ENCODE measurements at regions of chr19 and their contacts with region 1.

Region 1: DNA sequence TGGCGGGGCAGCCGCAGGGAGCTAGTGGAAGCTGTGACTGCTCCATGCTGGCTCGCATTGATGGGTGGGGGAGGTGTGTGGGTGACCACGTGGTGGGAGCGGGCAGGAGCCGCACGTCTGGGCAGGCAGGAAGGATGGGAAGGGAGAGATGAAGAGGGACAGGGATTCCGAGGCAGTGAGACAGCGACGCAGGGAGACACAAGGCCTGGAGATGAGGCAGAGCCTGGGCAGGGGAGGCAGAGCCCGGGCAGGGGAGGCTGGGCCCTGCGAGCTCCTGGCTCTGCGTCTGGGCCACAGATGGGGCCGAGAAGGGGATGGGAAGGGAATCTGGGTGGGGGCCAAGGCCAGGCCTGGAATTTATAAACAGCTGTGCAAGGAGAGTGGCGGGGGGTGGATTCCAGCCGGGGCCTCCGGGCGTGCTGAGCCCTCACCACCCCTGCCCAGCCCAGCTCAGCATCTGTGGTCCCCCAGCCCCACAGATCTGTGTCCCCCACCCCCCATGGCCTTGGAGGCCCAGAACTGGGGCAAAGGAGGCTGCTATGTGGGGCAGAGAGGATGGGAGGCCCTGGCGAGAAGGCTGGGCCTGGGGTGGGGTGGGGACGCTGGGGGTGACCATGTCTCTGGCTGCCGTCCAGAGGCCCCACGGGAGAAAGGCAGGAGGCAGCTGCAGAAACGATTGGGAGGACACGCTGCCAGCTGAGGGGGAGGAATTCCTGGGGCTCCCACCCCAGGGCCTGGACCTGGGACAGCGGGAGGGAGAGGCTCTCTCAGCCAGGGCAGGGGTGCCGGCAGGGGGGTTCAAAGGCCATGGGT is 6.0 kb downstream of the EHD2 start:
- DNase-seq: no peak
- H3K4me3 ChIP-seq: no peak overlapping the region
- H3K27ac ChIP-seq: peak overlapping the region; percentile 36; the same call in 1 of the 2 replicates
- H3K4me1 ChIP-seq: peaks cover 0 to 4% (median 3%) of the 10 kb centered on the region in 4 experiments; a peak in 4 of 7 replicates
- H3K27me3 ChIP-seq: no peaks in the 10 kb centered on the region
- CTCF ChIP-seq: no peak
- EP300 ChIP-seq: no peak
- POLR2A ChIP-seq: no peak
- RAD21 ChIP-seq: no peak

Region 2: GRCh38 chr19:47707135-47707925 is 11.9 kb before region 1 on chr19:
- CTCF ChIA-PET with region 1: interaction called, 143 read pairs
- POLR2A ChIA-PET with region 1: no interaction called
- DNase-seq: peak in 1 of 2 experiments; percentile 94
- H3K4me3 ChIP-seq: no peak overlapping the region
- H3K27ac ChIP-seq: no peak overlapping the region
- H3K4me1 ChIP-seq: no peaks in the 10 kb centered on the region
- H3K27me3 ChIP-seq: no peaks in the 10 kb centered on the region
- CTCF ChIP-seq: peak; percentile 91 to 93 (median 92)
- EP300 ChIP-seq: peak in 1 of 2 experiments; percentile 40; a peak in 1 of 3 replicates
- POLR2A ChIP-seq: no peak
- RAD21 ChIP-seq: peak; percentile 90 to 91